WTC11 (cell line): ENCODE measurements at regions of chr11 and their contacts with region 1.

Region 1: GRCh38 chr11:107999759-108000455 is 8.8 kb upstream of the CUL5 start:
- DNase-seq: peak; percentile 80
- ATAC-seq: peak; percentile 100
- H3K4me3 Mint-ChIP-seq: no peak overlapping the region
- H3K27ac Mint-ChIP-seq: 0 out of 2 replicates have a peak overlapping the region, but pooled peaks have one; percentile 49
- H3K4me1 Mint-ChIP-seq: peaks cover 8% of the 10 kb centered on the region
- H3K27me3 Mint-ChIP-seq: no peaks in the 10 kb centered on the region; the same call in 1 of the 2 replicates
- CTCF ChIP-seq: peak; percentile 57; the same call in 1 of the 2 replicates

Region 2: GRCh38 chr11:107916671-107917241 is 83.2 kb before region 1 on chr11:
- CTCF ChIA-PET with region 1: no interaction called
- POLR2A ChIA-PET with region 1: no interaction called
- DNase-seq: peak; percentile 81
- ATAC-seq: peak; percentile 94
- H3K4me3 Mint-ChIP-seq: no peak overlapping the region
- H3K27ac Mint-ChIP-seq: no peak overlapping the region
- H3K4me1 Mint-ChIP-seq: 0 out of 2 replicates have a peak, but pooled peaks cover 2% of the 10 kb centered on the region
- H3K27me3 Mint-ChIP-seq: no peaks in the 10 kb centered on the region; the same call in 1 of the 2 replicates
- CTCF ChIP-seq: peak; percentile 92

Region 3: GRCh38 chr11:108177570-108177969 is 177.7 kb after region 1 on chr11:
- CTCF ChIA-PET with region 1: no interaction called
- POLR2A ChIA-PET with region 1: no interaction called
- DNase-seq: no peak
- ATAC-seq: no peak
- H3K4me3 Mint-ChIP-seq: no peak overlapping the region
- H3K27ac Mint-ChIP-seq: no peak overlapping the region
- H3K4me1 Mint-ChIP-seq: no peaks in the 10 kb centered on the region
- H3K27me3 Mint-ChIP-seq: no peaks in the 10 kb centered on the region
- CTCF ChIP-seq: no peak

Region 4: GRCh38 chr11:108222686-108223448 is 223.0 kb after region 1 on chr11 and contains the start of gene ATM:
- CTCF ChIA-PET with region 1: interaction called, 10 read pairs
- POLR2A ChIA-PET with region 1: no interaction called
- DNase-seq: peak; percentile 99
- ATAC-seq: peak; percentile 92
- H3K4me3 Mint-ChIP-seq: no peak within 1 kb of the TSS
- H3K27ac Mint-ChIP-seq: no peak within 1 kb of the TSS; the same call in 1 of the 2 replicates
- H3K4me1 Mint-ChIP-seq: peaks cover 32% of the 10 kb centered on the region
- H3K27me3 Mint-ChIP-seq: no peaks in the 10 kb centered on the region
- CTCF ChIP-seq: no peak
- total RNA-seq, gene ATM: 49.5 to 56.6 TPM (median 54.7 TPM) in 3 replicates